Posterior cingulate gyrus (tissue), 11 donors: ENCODE measurements at regions of chr6 and their contacts with region 1.

Region 1: GRCh38 chr6:30357678-30358540 is 13.0 kb downstream of the RPP21 start:
- DNase-seq: peak in 9 of 10 donors; percentile 34 to 94 (median 65)

Region 2: DNA sequence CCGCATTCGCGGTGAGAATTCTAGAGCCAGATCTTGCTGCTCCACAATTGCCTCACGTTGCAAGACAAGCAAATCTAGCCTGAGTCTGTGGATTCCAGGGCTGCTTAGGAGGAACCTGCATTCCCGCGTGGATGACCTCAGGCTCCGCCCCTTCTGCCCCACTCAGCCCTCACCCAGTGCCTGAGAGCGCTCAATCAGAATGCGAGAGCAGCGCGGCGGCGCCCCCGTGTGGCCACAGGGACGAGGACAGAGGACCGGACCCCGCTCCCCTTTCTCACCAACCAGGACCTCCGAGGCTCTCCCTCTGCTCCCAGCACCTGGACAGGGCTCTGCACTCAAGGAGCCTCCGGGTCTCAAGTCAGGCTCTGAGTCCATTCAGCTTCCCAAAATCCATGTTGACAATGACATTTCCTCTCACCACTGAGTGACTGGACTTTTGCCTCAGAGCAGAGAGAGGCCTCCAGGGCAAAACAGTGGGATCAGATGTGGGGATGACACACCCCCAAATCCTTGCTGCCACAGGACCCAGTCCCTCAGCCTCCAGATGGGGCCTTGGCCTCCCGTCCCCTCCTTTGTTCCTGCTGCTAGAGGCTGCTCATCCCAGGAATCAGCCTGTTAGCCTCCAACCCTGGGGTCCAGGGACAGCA is 39.0 kb after region 1 on chr6:
- intact Hi-C with region 1: loop called (anchors 5 kb)
- DNase-seq: peak; percentile 36 to 95 (median 74)

Region 3: GRCh38 chr6:30571075-30571768 is 213.3 kb after region 1 on chr6 and contains the start of gene ABCF1:
- intact Hi-C with region 1: no loop called
- DNase-seq: peak; percentile 98 to 100 (median 99)

Region 4: GRCh38 chr6:30793521-30794194 is 435.7 kb after region 1 on chr6:
- intact Hi-C with region 1: no loop called
- DNase-seq: no peak